AG04449 (cell line): ENCODE measurements at regions of chr14 and their contacts with region 1.

Region 1: GRCh38 chr14:85528080-85528896 is 1.7 kb upstream of the FLRT2 start:
- DNase-seq: peak; percentile 72
- H3K4me3 ChIP-seq: peak overlapping the region; percentile 77
- CTCF ChIP-seq: peak; percentile 70

Region 2: GRCh38 chr14:85195872-85196477 is 332.3 kb before region 1 on chr14:
- CTCF ChIA-PET with region 1: interaction called, 19 read pairs
- POLR2A ChIA-PET with region 1: no interaction called
- DNase-seq: no peak
- H3K4me3 ChIP-seq: no peak overlapping the region
- CTCF ChIP-seq: peak; percentile 27

Region 3: DNA sequence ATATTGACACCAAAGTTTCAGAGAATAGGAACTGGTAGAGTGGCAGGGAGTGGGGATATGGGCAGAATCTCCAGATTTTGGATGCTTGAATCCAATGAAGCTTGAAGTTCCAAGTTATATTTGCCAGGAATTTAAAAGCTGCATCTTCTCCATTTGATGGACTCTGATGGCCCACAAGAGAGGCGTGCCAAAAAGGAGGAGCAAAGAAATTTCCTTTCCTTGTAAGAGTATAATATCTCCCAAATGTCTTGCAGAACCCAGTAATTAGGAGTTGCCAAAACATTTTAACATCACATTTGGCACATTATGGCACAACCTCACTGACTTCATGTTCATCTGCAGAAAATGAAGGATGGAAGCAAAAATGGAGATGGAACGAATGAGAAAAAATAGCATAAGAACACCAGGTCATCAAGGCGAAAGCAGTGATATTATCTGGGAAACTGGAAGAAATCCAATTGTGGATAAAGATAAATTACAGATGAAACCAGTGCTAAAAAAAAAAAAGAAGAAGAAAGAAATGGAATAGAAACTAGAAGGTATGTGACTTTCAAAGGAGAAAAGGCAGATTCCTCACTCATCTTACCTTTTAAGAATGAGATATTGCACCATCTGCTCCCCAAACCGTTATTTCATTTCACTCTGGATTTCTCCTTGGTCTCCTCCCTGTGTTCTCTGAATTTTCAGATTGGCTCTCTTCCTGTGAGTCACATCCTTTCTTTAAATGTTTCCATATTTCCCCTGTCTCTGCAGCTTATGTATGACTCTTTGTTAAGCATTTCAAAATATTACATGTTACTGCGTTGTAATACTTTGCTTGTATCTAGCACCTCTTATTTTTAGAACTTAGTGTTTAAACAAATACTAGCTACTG is 11.8 kb before region 1 on chr14:
- CTCF ChIA-PET with region 1: interaction called, 29 read pairs
- POLR2A ChIA-PET with region 1: interaction called, 3 read pairs
- DNase-seq: no peak
- H3K4me3 ChIP-seq: peak overlapping the region; percentile 2; the same call in 1 of the 2 replicates
- CTCF ChIP-seq: no peak